Activated B cell treated with CpG ODN at 0.5 μM for 24 hours (primary cell): ENCODE measurements at regions of chr5 and their contacts with region 1.

Region 1: DNA sequence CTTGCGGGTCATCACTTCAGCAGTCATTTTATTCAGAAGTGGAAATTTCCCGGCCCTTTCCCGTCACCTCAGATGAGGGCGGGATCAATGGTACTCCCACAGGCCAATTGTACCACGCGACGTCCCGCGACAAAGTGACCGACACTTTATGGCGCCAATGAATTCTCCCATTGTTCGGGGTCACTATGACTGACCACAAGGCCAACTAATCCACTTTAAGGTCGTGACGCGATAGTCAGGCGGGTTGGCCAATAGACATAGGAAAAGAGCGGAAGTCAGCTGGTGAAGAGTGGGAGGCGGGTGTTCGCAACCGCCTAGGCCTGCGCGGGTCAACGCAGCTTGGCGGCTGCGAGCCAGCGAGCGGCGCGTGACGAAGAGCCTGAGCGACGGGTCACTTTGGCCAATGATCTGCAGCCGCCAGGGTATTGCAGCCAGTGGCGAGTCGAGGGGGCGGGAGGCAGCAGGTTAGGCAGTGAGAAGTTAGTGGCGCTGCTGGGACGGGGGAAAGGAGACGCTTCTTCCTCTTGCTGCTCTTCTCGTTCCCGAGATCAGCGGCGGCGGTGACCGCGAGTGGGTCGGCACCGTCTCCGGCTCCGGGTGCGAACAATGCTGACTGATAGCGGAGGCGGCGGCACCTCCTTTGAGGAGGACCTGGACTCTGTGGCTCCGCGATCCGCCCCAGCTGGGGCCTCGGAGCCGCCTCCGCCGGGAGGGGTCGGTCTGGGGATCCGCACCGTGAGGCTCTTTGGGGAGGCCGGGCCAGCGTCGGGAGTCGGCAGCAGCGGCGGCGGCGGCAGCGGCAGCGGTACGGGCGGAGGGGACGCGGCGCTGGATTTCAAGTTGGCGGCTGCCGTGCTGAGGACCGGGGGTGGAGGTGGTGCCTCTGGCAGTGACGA is at the start of gene ANKHD1:
- DNase-seq: peak; percentile 90
- ATAC-seq: peak; percentile 79
- H3K4me3 Mint-ChIP-seq: no peak within 1 kb of the TSS
- H3K27ac Mint-ChIP-seq: no peak within 1 kb of the TSS
- H3K4me1 Mint-ChIP-seq: peaks cover 38% of the 10 kb centered on the region
- H3K27me3 Mint-ChIP-seq: no peaks in the 10 kb centered on the region
- CTCF ChIP-seq: no peak
- total RNA-seq, gene ANKHD1: 166 and 187 TPM in 2 replicates

Region 2: DNA sequence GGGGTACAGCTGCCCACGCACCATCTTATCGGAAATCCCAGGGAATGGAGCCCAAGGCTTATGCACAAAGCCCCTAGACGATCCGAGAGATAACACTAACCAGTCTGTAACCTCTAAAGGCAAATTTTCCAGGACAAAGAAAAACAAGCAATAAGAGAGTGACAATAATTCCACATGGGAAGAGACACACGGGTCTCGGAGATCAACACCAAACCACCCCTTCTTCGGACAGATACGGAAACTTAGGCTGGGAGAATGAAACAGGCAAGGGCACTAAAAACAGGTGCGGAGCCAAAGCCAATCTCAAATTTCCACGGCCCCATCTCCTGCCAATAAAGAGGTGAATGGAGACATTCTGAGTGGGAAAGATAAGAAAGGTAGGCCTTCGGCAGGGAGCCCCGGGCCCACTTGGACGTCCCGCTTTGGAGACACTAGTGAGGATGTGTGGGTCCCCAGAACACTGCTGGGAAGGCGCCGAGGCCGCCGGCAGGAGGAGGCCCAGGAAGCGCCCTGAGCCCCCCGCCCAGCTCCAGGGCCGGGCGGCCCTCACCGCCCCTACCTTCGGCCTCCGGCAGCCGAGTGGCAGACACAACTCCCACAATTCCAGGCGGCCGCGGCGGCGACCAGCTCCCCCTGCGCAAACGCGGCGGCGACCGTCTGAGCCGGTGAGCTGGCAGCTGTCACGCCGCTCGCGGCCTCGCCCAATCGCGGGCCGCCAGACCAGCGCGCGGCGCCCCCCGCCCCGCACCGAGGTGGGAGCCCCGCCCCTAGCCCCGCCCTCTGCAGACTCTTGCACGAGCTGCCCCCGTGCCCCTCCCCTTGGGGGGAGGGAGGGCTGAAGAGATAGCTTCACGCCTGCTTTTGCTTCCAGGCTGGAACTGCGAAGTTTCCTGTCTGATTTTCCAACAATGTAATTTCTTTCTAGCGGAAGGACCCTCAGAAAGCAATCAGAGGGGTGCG is 1203.6 kb before region 1 on chr5 and contains the start of gene SIL1:
- CTCF ChIA-PET with region 1: no interaction called
- POLR2A ChIA-PET with region 1: no interaction called
- intact Hi-C with region 1: loop called (anchors 10 kb)
- DNase-seq: peak; percentile 91
- ATAC-seq: peak; percentile 98
- H3K4me3 Mint-ChIP-seq: peak within 1 kb of the TSS; percentile 91
- H3K27ac Mint-ChIP-seq: peak within 1 kb of the TSS; percentile 90
- H3K4me1 Mint-ChIP-seq: peaks cover 21% of the 10 kb centered on the region
- H3K27me3 Mint-ChIP-seq: no peaks in the 10 kb centered on the region
- CTCF ChIP-seq: no peak
- total RNA-seq, gene SIL1: 16.1 and 22.0 TPM in 2 replicates

Region 3: GRCh38 chr5:140302786-140303639 is 98.6 kb before region 1 on chr5 and contains the start of gene PFDN1:
- CTCF ChIA-PET with region 1: no interaction called
- POLR2A ChIA-PET with region 1: interaction called, 3 read pairs
- intact Hi-C with region 1: loop called (anchors 1 kb)
- DNase-seq: peak; percentile 76
- ATAC-seq: peak; percentile 99
- H3K4me3 Mint-ChIP-seq: peak within 1 kb of the TSS; percentile 99
- H3K27ac Mint-ChIP-seq: peak within 1 kb of the TSS; percentile 97
- H3K4me1 Mint-ChIP-seq: peaks cover 21% of the 10 kb centered on the region
- H3K27me3 Mint-ChIP-seq: peaks cover 3% of the 10 kb centered on the region
- CTCF ChIP-seq: no peak
- total RNA-seq, gene PFDN1: 38.2 and 38.4 TPM in 2 replicates

Region 4: GRCh38 chr5:140564196-140565023 is 162.8 kb after region 1 on chr5 and contains the starts of genes APBB3 and SLC35A4:
- CTCF ChIA-PET with region 1: no interaction called
- POLR2A ChIA-PET with region 1: interaction called, 4 read pairs
- intact Hi-C with region 1: loop called (anchors 1 kb)
- DNase-seq: peak; percentile 89
- ATAC-seq: peak; percentile 90
- H3K4me3 Mint-ChIP-seq: peak within 1 kb of the TSS; percentile 98
- H3K27ac Mint-ChIP-seq: peak within 1 kb of the TSS; percentile 90
- H3K4me1 Mint-ChIP-seq: peaks cover 57% of the 10 kb centered on the region
- H3K27me3 Mint-ChIP-seq: no peaks in the 10 kb centered on the region
- CTCF ChIP-seq: no peak
- total RNA-seq, gene APBB3: 36.0 and 37.5 TPM in 2 replicates
- total RNA-seq, gene SLC35A4: 76.0 and 77.9 TPM in 2 replicates

Region 5: GRCh38 chr5:140664359-140665119 is 262.9 kb after region 1 on chr5 and contains the start of gene WDR55:
- CTCF ChIA-PET with region 1: no interaction called
- POLR2A ChIA-PET with region 1: interaction called, 6 read pairs
- intact Hi-C with region 1: loop called (anchors 1 kb)
- DNase-seq: peak; percentile 91
- ATAC-seq: peak; percentile 98
- H3K4me3 Mint-ChIP-seq: peak within 1 kb of the TSS; percentile 97
- H3K27ac Mint-ChIP-seq: peak within 1 kb of the TSS; percentile 95
- H3K4me1 Mint-ChIP-seq: peaks cover 30% of the 10 kb centered on the region
- H3K27me3 Mint-ChIP-seq: no peaks in the 10 kb centered on the region
- CTCF ChIP-seq: no peak
- total RNA-seq, gene WDR55: 33.8 and 36.9 TPM in 2 replicates

Region 6: DNA sequence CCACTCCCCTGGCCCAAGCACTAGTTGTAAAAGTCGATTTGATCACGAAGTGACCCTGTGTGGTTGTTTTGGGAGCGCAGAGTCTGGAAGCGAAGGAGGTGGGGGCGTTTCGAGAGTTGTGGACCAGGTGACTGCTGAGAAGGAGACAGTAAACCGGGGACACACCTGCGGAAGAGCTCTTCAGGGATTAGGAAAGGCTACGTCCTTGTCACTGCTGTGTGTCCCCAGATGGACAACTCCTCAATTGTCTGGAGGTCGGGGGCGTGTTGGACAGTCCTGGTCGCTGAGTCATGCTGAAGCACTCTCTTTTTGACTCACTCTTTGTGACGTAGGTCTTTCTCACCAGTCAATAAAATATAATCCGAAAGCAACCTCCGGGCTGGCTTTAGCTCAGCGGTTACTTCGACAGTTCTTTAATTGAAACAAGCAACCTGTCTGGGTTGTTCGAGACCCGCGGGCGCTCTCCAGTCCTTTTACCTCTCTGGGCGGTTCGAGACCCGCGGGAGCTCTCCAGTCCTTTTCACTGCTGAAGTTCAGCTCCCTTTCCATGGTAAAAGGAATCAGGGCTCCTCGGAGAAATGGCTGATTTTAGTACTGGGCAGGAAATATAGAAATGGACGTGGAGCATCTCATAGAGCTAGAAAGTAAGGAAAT is 309.4 kb after region 1 on chr5:
- CTCF ChIA-PET with region 1: interaction called, 3 read pairs
- POLR2A ChIA-PET with region 1: interaction called, 28 read pairs
- intact Hi-C with region 1: loop called (anchors 1 kb)
- DNase-seq: peak; percentile 60
- ATAC-seq: peak; percentile 85
- H3K4me3 Mint-ChIP-seq: peak overlapping the region; percentile 93
- H3K27ac Mint-ChIP-seq: peak overlapping the region; percentile 90
- H3K4me1 Mint-ChIP-seq: peaks cover 18% of the 10 kb centered on the region
- H3K27me3 Mint-ChIP-seq: peaks cover 3% of the 10 kb centered on the region
- CTCF ChIP-seq: no peak